Activated T-helper 1 cell treated with anti-CD3 and anti-CD28 coated beads, Interleukin-12 subunit alpha, Interleukin-12 subunit beta, Interleukin-2, Interleukin-4 antibody, amounts not matched to agents 30 ng/mL and 10 ng/mL and 1 ng/mL, durations not matched to agents 14 hours and 24 hours and 36 hours (primary cell): ENCODE measurements at regions of chr18 and their contacts with region 1.

Region 1: GRCh38 chr18:10121786-10122542 is 208.1 kb downstream of the VAPA start:
- DNase-seq: no peak
- H3K4me3 Mint-ChIP-seq: no peak overlapping the region
- H3K27ac Mint-ChIP-seq: peak overlapping the region; percentile 55
- H3K4me1 Mint-ChIP-seq: peaks cover 25% of the 10 kb centered on the region
- H3K27me3 Mint-ChIP-seq: peaks cover 8% of the 10 kb centered on the region

Region 2: GRCh38 chr18:10059610-10060468 is 62.1 kb before region 1 on chr18:
- intact Hi-C with region 1: no loop called
- DNase-seq: no peak
- H3K4me3 Mint-ChIP-seq: no peak overlapping the region
- H3K27ac Mint-ChIP-seq: no peak overlapping the region
- H3K4me1 Mint-ChIP-seq: peaks cover 13% of the 10 kb centered on the region
- H3K27me3 Mint-ChIP-seq: peaks cover 6% of the 10 kb centered on the region

Region 3: GRCh38 chr18:10499230-10499629 is 377.3 kb after region 1 on chr18:
- intact Hi-C with region 1: loop called (anchors 1 kb)
- DNase-seq: no peak
- H3K4me3 Mint-ChIP-seq: no peak overlapping the region
- H3K27ac Mint-ChIP-seq: no peak overlapping the region
- H3K4me1 Mint-ChIP-seq: peaks cover 9% of the 10 kb centered on the region
- H3K27me3 Mint-ChIP-seq: peaks cover 12% of the 10 kb centered on the region